Activated T-helper 1 cell treated with anti-CD3 and anti-CD28 coated beads, Interleukin-12 subunit alpha, Interleukin-12 subunit beta, Interleukin-2, Interleukin-4 antibody, amounts not matched to agents 30 ng/mL and 10 ng/mL and 1 ng/mL, durations not matched to agents 14 hours and 24 hours and 36 hours (primary cell): ENCODE measurements at regions of chr2 and their contacts with region 1.

Region 1: DNA sequence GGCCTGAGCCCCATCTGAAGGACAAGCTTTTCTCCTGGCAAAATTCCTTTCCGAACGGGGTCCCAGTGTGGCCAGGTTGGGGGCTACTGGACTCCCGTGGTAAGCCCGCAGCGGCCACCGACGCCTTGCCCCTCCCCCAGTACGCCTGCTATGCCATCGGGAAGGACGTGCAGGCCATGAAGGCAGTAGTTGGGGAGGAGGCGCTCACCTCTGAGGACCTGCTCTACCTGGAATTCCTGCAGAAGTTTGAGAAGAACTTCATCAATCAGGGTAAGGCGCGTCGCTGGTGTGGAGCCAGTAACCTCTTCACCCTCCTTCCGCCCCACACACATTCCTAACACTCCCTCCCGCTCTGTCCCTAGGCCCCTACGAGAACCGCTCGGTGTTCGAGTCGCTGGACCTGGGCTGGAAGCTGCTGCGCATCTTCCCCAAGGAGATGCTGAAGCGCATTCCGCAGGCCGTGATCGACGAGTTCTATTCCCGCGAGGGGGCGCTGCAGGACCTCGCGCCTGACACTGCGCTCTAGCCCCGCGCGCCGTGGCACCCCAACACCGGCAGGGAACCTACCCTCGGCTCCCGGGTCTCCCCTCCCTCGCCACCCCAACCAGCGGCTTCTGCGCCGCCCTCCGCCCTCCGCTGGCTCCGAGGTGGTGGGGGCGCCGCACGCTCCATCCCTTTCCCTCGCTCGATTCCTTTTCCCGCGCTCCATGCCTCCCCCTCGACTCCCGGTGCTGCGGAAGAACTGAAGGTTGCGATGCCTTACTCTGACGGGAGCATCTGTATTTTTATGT is 13.6 kb upstream of the ANKRD53 start:
- DNase-seq: peak; percentile 73
- H3K4me3 Mint-ChIP-seq: peak overlapping the region; percentile 89
- H3K27ac Mint-ChIP-seq: no peak overlapping the region
- H3K4me1 Mint-ChIP-seq: peaks cover 9% of the 10 kb centered on the region
- H3K27me3 Mint-ChIP-seq: peaks cover 27% of the 10 kb centered on the region

Region 2: GRCh38 chr2:70935468-70936164 is 29.2 kb before region 1 on chr2 and contains the start of gene ATP6V1B1:
- intact Hi-C with region 1: no loop called
- DNase-seq: no peak
- H3K4me3 Mint-ChIP-seq: no peak within 1 kb of the TSS
- H3K27ac Mint-ChIP-seq: no peak within 1 kb of the TSS
- H3K4me1 Mint-ChIP-seq: no peaks in the 10 kb centered on the region
- H3K27me3 Mint-ChIP-seq: peaks cover 13% of the 10 kb centered on the region
- total RNA-seq, gene ATP6V1B1: not detected in 2 replicates

Region 3: DNA sequence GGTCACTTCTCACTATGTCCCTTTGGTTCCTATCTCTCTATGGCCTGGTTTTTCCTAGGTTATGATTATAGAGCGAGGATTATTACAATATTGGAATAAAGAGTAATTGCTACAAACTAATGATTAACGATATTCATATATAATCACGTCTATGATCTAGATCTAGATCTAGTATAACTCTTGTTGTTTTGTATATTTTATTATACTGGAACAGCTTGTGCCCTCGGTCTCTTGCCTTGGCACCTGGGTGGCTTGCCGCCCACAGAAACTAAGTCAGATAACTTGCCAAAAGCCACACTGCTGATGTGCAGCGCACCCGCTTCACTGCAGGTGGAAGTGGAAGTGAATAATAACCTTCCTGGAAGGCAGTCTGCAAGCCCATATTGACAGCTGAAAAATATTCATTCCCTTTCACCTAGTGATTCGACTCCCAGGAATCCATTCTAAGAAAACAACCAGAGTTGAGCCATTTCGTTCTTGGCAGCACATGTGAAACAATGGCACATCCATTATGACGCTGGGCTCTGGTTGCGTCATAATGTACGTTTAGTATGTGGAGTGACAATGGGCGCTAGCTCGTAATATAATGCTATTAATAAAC is 12.9 kb after region 1 on chr2:
- intact Hi-C with region 1: loop called (anchors 1 kb)
- DNase-seq: no peak
- H3K4me3 Mint-ChIP-seq: peak overlapping the region; percentile 78
- H3K27ac Mint-ChIP-seq: no peak overlapping the region
- H3K4me1 Mint-ChIP-seq: peaks cover 18% of the 10 kb centered on the region
- H3K27me3 Mint-ChIP-seq: peaks cover under 1% of the 10 kb centered on the region

Region 4: GRCh38 chr2:71006955-71007799 is 42.4 kb after region 1 on chr2:
- intact Hi-C with region 1: no loop called
- DNase-seq: no peak
- H3K4me3 Mint-ChIP-seq: no peak overlapping the region
- H3K27ac Mint-ChIP-seq: no peak overlapping the region
- H3K4me1 Mint-ChIP-seq: no peaks in the 10 kb centered on the region
- H3K27me3 Mint-ChIP-seq: peaks cover 9% of the 10 kb centered on the region